Transverse colon (tissue), 4 donors: ENCODE measurements at regions of chr7 and their contacts with region 1.

Region 1: DNA sequence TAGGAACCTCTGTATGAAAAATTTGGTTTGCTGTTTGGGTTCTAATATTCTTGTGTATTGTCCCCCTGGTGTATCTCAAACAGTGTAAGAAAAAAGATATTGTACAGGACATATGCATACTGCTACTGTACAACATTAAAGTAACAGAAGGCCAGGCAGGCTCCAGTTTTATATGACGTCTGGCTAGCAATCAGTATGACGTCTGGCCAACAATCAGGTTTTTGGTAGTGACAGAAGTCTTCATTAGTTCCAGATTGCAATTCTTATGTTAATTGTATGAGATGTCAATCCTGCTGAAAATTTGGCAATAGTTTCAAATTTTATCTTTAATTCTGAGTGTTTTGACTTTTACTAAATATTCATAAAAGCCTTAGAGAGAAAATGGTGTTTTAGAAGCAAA is 67.9 kb upstream of the KCND2 start:
- DNase-seq: no peak
- H3K4me3 ChIP-seq: no peak overlapping the region
- H3K27ac ChIP-seq: no peak overlapping the region
- H3K4me1 ChIP-seq: no peaks in the 10 kb centered on the region
- H3K27me3 ChIP-seq: no peaks in the 10 kb centered on the region
- CTCF ChIP-seq: no peak
- EP300 ChIP-seq: no peak
- POLR2A ChIP-seq: no peak

Region 2: GRCh38 chr7:120241973-120242372 is 36.9 kb after region 1 on chr7:
- in situ Hi-C with region 1: no loop called
- intact Hi-C with region 1: loop called (anchors 2 kb)
- DNase-seq: no peak
- H3K4me3 ChIP-seq: no peak overlapping the region
- H3K27ac ChIP-seq: no peak overlapping the region
- H3K4me1 ChIP-seq: no peaks in the 10 kb centered on the region
- H3K27me3 ChIP-seq: no peaks in the 10 kb centered on the region
- CTCF ChIP-seq: no peak
- EP300 ChIP-seq: no peak
- POLR2A ChIP-seq: no peak

Region 3: DNA sequence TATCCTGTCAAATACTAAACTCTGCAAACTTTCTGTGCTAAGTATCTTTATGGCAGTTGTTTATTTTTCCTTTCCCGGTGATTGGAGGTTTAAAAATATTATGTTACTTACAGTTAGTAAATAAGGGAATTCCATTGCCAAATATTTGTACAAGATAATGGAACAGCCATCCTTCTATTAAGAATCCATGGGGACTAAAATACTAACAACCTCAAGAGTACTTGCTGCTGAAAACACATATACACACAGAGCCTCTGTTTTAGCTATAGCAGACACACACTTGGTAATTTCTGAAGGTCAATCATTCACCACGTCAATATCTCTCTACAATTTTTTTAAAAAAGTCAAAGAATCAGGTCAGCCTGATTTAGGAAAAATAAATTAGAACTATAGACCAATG is 620.5 kb after region 1 on chr7:
- in situ Hi-C with region 1: no loop called
- intact Hi-C with region 1: no loop called
- DNase-seq: no peak
- H3K4me3 ChIP-seq: no peak overlapping the region
- H3K27ac ChIP-seq: no peak overlapping the region
- H3K4me1 ChIP-seq: peaks cover 0 to 11% (median 0%) of the 10 kb centered on the region in 4 donors
- H3K27me3 ChIP-seq: no peaks in the 10 kb centered on the region
- CTCF ChIP-seq: no peak
- EP300 ChIP-seq: no peak
- POLR2A ChIP-seq: no peak